Psoas muscle (tissue), 8 donors: ENCODE measurements at regions of chr1 and their contacts with region 1.

Region 1: DNA sequence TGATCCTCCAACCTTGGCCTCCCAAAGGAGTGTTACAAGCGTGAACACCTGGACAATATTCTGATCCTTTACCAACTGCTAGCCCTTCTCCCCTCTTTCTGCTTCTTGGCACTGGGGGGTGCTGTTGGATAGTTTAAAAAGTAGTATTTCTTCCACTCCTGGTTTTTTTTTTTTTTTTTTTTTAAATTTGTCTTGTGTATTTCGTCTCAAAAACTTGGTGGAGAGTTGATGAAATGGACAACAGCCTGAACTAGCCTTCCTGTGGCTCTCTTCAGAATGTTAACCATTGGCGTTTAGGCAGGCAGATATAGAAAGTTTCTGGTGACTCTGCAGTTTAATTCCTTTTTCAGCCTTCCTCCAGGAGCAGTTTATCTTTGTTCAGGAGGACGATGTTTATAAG is 69.7 kb upstream of the USP24 start:
- DNase-seq: no peak
- ATAC-seq: peak; percentile 65 to 84 (median 74)
- H3K4me3 ChIP-seq: no peak overlapping the region
- H3K27ac ChIP-seq: no peak overlapping the region
- H3K4me1 ChIP-seq: no peaks in the 10 kb centered on the region
- H3K27me3 ChIP-seq: no peaks in the 10 kb centered on the region
- CTCF ChIP-seq: peak; percentile 64

Region 2: GRCh38 chr1:55337801-55338447 is 53.1 kb after region 1 on chr1:
- intact Hi-C with region 1: loop called in 1 of 2 experiments (anchors 5 kb)
- DNase-seq: no peak
- ATAC-seq: peak in 1 of 4 donors; percentile 46
- H3K4me3 ChIP-seq: no peak overlapping the region
- H3K27ac ChIP-seq: no peak overlapping the region
- H3K4me1 ChIP-seq: no peaks in the 10 kb centered on the region
- H3K27me3 ChIP-seq: no peaks in the 10 kb centered on the region
- CTCF ChIP-seq: peak; percentile 31

Region 3: DNA sequence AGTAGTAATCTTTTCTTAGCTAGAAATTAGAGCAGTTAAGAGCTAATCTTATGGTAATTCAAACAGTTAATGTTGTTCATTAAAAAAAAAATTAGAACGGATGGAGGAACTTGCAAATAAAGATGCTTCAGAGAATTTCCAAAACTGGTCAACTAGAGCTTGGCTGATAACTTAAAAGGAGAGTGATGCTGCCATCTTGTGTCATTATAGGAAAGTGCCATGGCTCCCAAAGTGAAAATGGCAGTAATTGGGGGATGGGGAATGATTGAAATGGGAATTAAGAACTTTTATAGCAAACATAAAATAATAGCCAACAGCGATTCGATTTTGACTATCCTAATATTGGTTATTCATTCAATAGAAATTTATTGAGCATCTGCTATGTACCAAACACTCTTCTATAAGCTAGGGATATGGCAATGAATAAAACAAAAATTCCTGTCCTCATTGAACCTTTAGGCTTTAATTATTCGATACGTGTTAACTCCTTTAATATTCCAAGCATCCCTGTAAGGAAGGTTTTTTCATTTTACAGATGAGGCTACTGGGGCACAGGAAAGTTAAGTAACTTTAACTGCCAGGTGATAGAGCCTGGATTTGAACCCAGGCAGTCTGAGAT is 1300.2 kb after region 1 on chr1:
- intact Hi-C with region 1: loop called (anchors 2 kb)
- DNase-seq: no peak
- ATAC-seq: peak; percentile 57 to 88 (median 74)
- H3K4me3 ChIP-seq: no peak overlapping the region
- H3K27ac ChIP-seq: no peak overlapping the region
- H3K4me1 ChIP-seq: peaks cover 7% of the 10 kb centered on the region
- H3K27me3 ChIP-seq: no peaks in the 10 kb centered on the region
- CTCF ChIP-seq: peak; percentile 87

Region 4: GRCh38 chr1:56709269-56709880 is 1424.5 kb after region 1 on chr1:
- intact Hi-C with region 1: loop called in 1 of 2 experiments (anchors 5 kb)
- DNase-seq: no peak
- ATAC-seq: peak; percentile 57 to 81 (median 72)
- H3K4me3 ChIP-seq: no peak overlapping the region
- H3K27ac ChIP-seq: peak overlapping the region; percentile 14
- H3K4me1 ChIP-seq: peaks cover 4% of the 10 kb centered on the region
- H3K27me3 ChIP-seq: no peaks in the 10 kb centered on the region
- CTCF ChIP-seq: peak; percentile 73

Region 5: DNA sequence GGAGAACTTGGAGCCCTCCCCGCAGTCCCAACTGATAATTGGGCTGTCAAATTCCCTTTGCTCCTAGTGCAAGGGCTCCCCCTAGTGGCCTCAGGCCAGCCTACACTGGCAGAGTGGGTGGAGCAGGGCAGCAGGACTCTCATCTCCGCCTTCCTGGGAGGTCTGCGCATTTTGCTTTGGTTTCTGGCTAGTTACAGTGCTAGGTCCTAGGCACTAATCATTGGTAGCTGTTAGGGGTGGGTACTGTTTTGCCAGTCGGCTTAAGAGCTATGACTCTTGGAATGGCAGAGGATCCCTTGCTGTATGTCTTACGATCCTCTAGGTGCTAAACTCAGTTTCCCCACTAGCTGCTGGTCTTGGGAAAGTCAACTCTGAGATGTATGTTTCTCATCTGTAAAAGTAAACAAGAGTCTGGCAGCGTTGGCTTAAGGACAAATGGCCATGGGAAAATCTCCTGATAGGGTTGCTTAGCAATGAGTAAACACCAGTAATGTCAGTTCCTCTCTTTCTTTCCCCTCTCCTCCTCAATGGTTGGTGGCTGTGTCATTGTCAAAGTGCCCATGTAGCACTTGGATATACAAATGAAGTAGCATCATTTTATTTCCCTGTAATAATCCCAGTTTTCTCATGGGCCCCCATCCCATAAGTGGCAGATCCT is 1536.4 kb after region 1 on chr1:
- intact Hi-C with region 1: loop called (anchors 10 kb)
- DNase-seq: peak; percentile 79 to 90
- ATAC-seq: peak; percentile 76 to 88 (median 81)
- H3K4me3 ChIP-seq: no peak overlapping the region
- H3K27ac ChIP-seq: no peak overlapping the region
- H3K4me1 ChIP-seq: peaks cover 28% of the 10 kb centered on the region
- H3K27me3 ChIP-seq: peaks cover 0 to 6% (median 0%) of the 10 kb centered on the region in 3 donors
- CTCF ChIP-seq: peak; percentile 95